ENCODE measurements at regions of chr11 and their contacts with region 1.

Region 1: DNA sequence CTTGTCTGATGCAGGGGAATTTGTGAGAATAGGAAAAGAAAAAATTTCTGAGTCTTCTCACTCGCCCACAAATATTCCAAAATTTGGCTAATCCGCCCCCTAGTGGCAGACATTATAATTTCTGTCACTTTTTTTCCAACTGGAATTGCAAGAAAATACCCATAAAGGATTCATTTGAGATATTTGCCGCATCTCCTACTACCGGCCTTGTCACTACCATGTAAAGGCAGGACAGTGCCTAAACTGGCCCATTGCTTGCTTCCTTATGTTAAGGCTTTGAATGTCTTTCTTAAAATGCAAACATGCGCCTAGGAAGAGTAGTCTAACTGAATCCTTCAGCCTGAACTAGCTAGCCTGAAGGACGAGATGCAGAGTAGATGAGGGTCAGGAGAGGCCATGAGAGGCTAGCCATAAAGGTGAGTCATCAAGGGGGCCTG is 9.3 kb upstream of the CEP295 start:
- DNase-seq: no peak
- ATAC-seq: peak; percentile 57
- H3K4me3 ChIP-seq: no peak overlapping the region
- H3K27ac ChIP-seq: no peak overlapping the region
- H3K4me1 ChIP-seq: peaks cover 3 to 4% of the 10 kb centered on the region in 2 experiments; a peak in 3 of 4 replicates
- H3K27me3 ChIP-seq: peaks cover 8% of the 10 kb centered on the region; the same call in 1 of the 2 replicates
- CTCF ChIP-seq: peak; percentile 50 to 79 (median 55); a peak in 5 of 6 replicates
- POLR2A ChIP-seq: no peak
- RAD21 ChIP-seq: peak; percentile 67

Region 2: DNA sequence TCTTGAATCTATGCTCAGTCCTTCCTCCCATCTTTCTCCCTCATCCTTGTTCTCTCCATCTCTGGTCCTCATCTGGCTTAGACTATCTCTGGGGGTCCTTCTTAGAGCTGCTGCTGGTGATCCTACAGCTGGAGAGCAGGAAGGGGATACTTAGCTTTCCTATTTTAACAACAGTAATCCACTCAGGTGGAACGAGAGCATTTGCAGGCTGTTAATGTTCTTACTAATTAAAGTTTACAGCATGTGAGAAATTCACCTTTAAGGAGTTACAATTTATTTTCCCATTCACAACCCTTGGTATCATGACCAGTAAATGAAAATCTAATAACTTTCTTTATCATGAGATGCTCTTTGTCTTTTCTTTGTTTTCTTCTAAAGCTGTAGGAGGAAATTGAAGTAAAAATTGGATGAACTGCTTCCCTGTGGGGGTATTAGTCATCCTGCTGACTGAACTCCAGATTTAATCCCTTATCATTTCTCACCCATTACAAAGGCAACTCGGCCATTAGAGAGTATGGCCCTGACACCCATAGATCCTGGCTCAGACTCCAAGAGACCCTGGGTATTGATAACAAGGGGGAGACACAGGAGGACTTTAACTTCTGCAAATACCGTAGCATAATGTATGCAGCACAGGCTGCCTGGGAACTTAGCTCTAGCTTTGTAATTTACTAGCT is 720.3 kb before region 1 on chr11:
- CTCF ChIA-PET with region 1: no interaction called
- POLR2A ChIA-PET with region 1: no interaction called
- RAD21 ChIA-PET with region 1: no interaction called
- intact Hi-C with region 1: loop called (anchors 10 kb)
- DNase-seq: no peak
- ATAC-seq: no peak
- H3K4me3 ChIP-seq: no peak overlapping the region
- H3K27ac ChIP-seq: no peak overlapping the region
- H3K4me1 ChIP-seq: no peaks in the 10 kb centered on the region
- H3K27me3 ChIP-seq: no peaks in the 10 kb centered on the region
- CTCF ChIP-seq: no peak
- POLR2A ChIP-seq: no peak
- RAD21 ChIP-seq: no peak

Region 3: DNA sequence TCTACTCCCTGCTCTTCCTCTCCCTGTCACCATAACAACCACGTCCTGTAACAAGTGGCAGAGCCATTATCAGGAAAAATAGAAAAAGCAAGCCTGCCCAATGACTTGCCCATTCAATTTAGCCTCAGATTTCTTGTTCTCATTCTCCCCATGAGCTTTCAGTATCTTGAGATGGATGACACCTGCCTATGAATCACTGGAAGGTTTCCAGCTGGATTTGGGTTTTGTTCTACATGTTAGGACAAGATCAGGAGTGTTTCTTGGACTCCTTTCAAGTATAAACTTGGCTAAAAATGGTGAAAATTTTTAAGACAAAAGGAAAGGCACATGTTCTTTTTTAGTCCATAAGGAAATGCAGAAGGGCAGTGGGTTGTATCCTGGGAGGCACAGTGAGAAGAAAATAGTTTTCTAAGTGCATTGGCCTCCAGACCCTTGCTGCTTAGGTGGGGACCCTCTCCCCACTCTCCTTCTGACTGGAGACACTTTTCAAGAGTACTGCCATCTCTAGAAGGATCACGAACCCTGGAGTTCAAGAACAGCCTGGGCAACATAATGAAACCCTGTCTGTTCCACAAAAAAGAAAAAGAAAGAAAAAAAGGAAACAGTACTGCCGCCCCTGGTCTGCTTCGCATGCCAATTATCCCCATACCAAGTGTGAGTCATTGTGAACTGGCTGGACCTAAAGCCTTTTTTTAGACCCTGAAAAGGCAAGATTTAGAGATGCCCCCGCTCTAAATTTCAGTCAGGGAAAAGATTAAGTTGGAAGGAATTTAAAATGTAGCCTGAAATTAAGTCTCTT is 631.7 kb before region 1 on chr11:
- CTCF ChIA-PET with region 1: no interaction called
- POLR2A ChIA-PET with region 1: no interaction called
- RAD21 ChIA-PET with region 1: no interaction called
- intact Hi-C with region 1: no loop called
- DNase-seq: no peak
- ATAC-seq: peak; percentile 74
- H3K4me3 ChIP-seq: peak overlapping the region in 1 of 2 experiments; percentile 12; a peak in 1 of 4 replicates
- H3K27ac ChIP-seq: no peak overlapping the region
- H3K4me1 ChIP-seq: peaks cover 2 to 14% of the 10 kb centered on the region in 2 experiments; a peak in 2 of 4 replicates
- H3K27me3 ChIP-seq: no peaks in the 10 kb centered on the region
- CTCF ChIP-seq: no peak
- POLR2A ChIP-seq: no peak
- RAD21 ChIP-seq: no peak

Region 4: GRCh38 chr11:93710239-93710638 is 58.1 kb after region 1 on chr11:
- CTCF ChIA-PET with region 1: no interaction called
- POLR2A ChIA-PET with region 1: no interaction called
- RAD21 ChIA-PET with region 1: no interaction called
- intact Hi-C with region 1: no loop called
- DNase-seq: no peak
- ATAC-seq: no peak
- H3K4me3 ChIP-seq: no peak overlapping the region
- H3K27ac ChIP-seq: no peak overlapping the region
- H3K4me1 ChIP-seq: no peaks in the 10 kb centered on the region
- H3K27me3 ChIP-seq: no peaks in the 10 kb centered on the region
- CTCF ChIP-seq: no peak
- POLR2A ChIP-seq: no peak
- RAD21 ChIP-seq: no peak